ENCODE measurements at regions of chr12 and their contacts with region 1.

Region 1: GRCh38 chr12:128259556-128260070 is 7.4 kb upstream of the TMEM132C start:
- DNase-seq: peak in 3 of 6 donors; percentile 7 to 48 (median 32)
- ATAC-seq: peak in 3 of 4 donors; percentile 63 to 74 (median 72)
- H3K4me3 ChIP-seq: no peak overlapping the region
- H3K27ac ChIP-seq: no peak overlapping the region
- H3K4me1 ChIP-seq: no peaks in the 10 kb centered on the region
- H3K27me3 ChIP-seq: no peaks in the 10 kb centered on the region
- CTCF ChIP-seq: peak; percentile 49 to 69 (median 56)

Region 2: DNA sequence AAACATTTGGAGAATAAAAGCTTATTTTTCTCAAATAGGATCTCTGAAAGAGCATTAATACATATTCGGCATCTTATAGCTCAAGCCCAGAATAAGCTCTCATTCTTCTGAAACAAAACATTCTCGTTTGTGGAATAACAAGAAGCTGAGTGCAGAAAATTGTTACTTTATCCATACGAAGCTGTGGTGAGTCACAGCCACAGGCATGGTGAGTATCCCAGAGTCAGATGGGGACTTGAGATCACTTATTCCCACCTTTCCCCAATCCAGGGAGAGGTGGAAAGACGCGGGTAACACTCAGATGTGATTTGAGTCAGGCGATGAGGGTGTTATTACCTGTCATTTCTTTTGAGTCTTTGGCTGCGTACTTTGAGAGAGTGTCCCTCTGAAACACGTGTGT is 207.3 kb before region 1 on chr12:
- intact Hi-C with region 1: no loop called
- DNase-seq: no peak
- ATAC-seq: no peak
- H3K4me3 ChIP-seq: no peak overlapping the region
- H3K27ac ChIP-seq: no peak overlapping the region
- H3K4me1 ChIP-seq: no peaks in the 10 kb centered on the region
- H3K27me3 ChIP-seq: no peaks in the 10 kb centered on the region
- CTCF ChIP-seq: no peak

Region 3: GRCh38 chr12:128091101-128091720 is 168.4 kb before region 1 on chr12:
- intact Hi-C with region 1: no loop called
- DNase-seq: no peak
- ATAC-seq: no peak
- H3K4me3 ChIP-seq: no peak overlapping the region
- H3K27ac ChIP-seq: no peak overlapping the region
- H3K4me1 ChIP-seq: no peaks in the 10 kb centered on the region
- H3K27me3 ChIP-seq: no peaks in the 10 kb centered on the region
- CTCF ChIP-seq: no peak

Region 4: GRCh38 chr12:128394137-128394536 is 134.5 kb after region 1 on chr12:
- intact Hi-C with region 1: loop called in 1 of 3 experiments (anchors 5 kb)
- DNase-seq: no peak
- ATAC-seq: no peak
- H3K4me3 ChIP-seq: no peak overlapping the region
- H3K27ac ChIP-seq: no peak overlapping the region
- H3K4me1 ChIP-seq: no peaks in the 10 kb centered on the region
- H3K27me3 ChIP-seq: no peaks in the 10 kb centered on the region
- CTCF ChIP-seq: no peak

Region 5: GRCh38 chr12:128613837-128614590 is 354.4 kb after region 1 on chr12:
- intact Hi-C with region 1: no loop called
- DNase-seq: no peak
- ATAC-seq: no peak
- H3K4me3 ChIP-seq: no peak overlapping the region
- H3K27ac ChIP-seq: no peak overlapping the region
- H3K4me1 ChIP-seq: no peaks in the 10 kb centered on the region
- H3K27me3 ChIP-seq: no peaks in the 10 kb centered on the region
- CTCF ChIP-seq: no peak

Measured in pancreas (tissue), 10 donors.